ENCODE measurements at regions of chr15 and their contacts with region 1.

Region 1: GRCh38 chr15:97052241-97052927 is 721.9 kb downstream of the NR2F2 start:
- DNase-seq: no peak
- ATAC-seq: no peak

Region 2: GRCh38 chr15:96827981-96828380 is 224.4 kb before region 1 on chr15:
- intact Hi-C with region 1: loop called (anchors 10 kb)
- DNase-seq: no peak
- ATAC-seq: no peak

Region 3: GRCh38 chr15:97446141-97446540 is 393.8 kb after region 1 on chr15:
- intact Hi-C with region 1: no loop called
- DNase-seq: no peak
- ATAC-seq: no peak

Region 4: DNA sequence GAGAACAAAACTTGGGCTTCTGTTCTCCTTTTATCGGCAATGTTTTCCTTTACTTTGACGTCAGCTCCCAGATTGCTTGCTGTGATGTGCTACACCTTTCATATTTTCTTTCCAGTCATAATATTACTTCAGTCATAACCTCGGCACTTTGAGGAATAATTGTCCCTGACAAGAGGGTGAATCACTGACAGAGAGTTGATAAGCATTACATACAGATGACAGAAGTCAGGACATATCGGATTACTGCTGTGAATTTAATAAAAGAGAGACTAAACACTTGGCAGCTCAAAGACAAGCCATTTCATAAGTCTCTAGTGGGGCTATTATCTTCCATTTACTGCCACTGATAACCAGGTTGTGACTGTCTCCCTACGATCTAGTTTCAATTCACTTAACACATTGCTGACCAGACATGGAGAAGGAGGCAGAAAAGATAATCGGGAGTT is 546.0 kb after region 1 on chr15:
- intact Hi-C with region 1: no loop called
- DNase-seq: no peak
- ATAC-seq: no peak

Region 5: GRCh38 chr15:97745465-97746071 is 693.2 kb after region 1 on chr15:
- intact Hi-C with region 1: no loop called
- DNase-seq: no peak
- ATAC-seq: no peak